HepG2 (cell line): ENCODE measurements at regions of chr4 and their contacts with region 1.

Region 1: DNA sequence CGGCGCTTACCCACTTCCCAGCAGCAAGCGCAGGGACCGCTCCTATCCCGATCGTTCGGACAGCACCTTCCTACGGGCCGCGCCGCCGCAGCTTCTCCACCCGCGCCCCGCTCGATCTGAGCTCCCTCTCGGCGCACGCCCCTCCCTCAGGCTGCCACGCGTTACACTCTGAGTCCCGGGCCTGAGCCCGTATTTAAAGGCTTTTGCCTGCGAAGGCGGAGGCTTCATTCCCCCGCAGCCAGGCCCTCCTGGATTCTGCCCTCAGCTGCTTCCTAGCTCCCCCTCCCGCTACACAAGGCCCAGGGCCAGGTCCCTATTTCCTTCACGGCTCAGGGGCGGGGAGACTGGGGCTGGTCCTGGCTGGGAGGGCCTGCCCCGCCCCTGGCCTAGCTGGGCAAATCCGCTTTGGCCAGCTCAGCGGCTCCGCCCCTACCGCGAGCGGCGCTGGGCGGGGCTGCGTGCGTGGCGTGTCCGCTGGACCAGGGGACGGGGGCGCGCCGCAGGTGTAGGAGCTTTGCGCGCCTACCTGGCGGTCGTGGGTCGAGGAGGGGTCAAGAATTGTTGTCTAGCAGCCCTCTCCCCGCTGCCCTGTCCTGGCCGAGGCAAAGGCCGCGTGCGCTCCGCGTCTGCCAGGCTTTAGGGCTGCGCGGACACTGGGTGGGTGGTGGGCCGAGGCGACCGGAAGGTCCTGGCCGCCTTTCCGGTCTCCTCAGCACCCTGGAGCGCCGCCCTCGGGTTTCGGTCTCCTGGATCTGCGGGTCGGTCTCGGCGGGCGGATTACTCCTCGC is at the start of gene UGDH:
- DNase-seq: peak; percentile 98
- ATAC-seq: peak; percentile 89
- H3K4me3 ChIP-seq: peak within 1 kb of the TSS; percentile 95 to 96 (median 96)
- H3K27ac ChIP-seq: peak within 1 kb of the TSS; percentile 94
- H3K4me1 ChIP-seq: peaks cover 24% of the 10 kb centered on the region
- H3K27me3 ChIP-seq: peaks cover 0 to 4% of the 10 kb centered on the region in 2 experiments; a peak in 1 of 5 replicates
- CTCF ChIP-seq: peak; percentile 49
- EP300 ChIP-seq: peak; percentile 11 to 55; a peak in 2 of 4 replicates
- POLR2A ChIP-seq: peak; percentile 100
- RAD21 ChIP-seq: peak; percentile 76
- total RNA-seq, gene UGDH: 384 and 661 TPM in 2 replicates

Region 2: DNA sequence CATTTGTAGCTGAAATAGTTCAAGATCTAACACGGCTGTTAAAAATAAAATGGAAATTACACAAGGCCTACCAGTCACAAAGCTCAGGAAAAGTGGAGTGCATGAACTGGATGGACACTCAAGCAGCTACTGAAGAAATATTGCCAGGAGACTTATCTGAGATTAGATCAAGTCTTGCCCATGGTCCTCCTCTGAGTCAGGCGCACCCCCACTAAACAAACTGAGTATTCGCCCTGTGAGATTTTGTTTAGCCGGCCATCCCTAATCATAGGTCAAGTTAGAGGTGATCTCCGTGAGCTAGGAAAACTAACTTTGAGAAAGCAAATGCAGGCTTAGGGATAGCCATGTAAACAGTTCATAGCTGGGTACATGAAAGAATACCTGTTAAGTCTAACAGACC is 38.8 kb before region 1 on chr4:
- CTCF ChIA-PET with region 1: no interaction called
- POLR2A ChIA-PET with region 1: interaction called, 11 read pairs
- in situ Hi-C with region 1: no loop called
- intact Hi-C with region 1: no loop called
- DNase-seq: no peak
- ATAC-seq: no peak
- H3K4me3 ChIP-seq: no peak overlapping the region
- H3K27ac ChIP-seq: no peak overlapping the region
- H3K4me1 ChIP-seq: peaks cover 43% of the 10 kb centered on the region
- H3K27me3 ChIP-seq: no peaks in the 10 kb centered on the region
- CTCF ChIP-seq: no peak
- EP300 ChIP-seq: no peak
- POLR2A ChIP-seq: no peak
- RAD21 ChIP-seq: no peak

Region 3: GRCh38 chr4:39559626-39560025 is 32.2 kb after region 1 on chr4:
- CTCF ChIA-PET with region 1: no interaction called
- POLR2A ChIA-PET with region 1: interaction called, 66 read pairs
- in situ Hi-C with region 1: no loop called
- intact Hi-C with region 1: loop called (anchors 1 kb)
- DNase-seq: no peak
- ATAC-seq: no peak
- H3K4me3 ChIP-seq: no peak overlapping the region
- H3K27ac ChIP-seq: no peak overlapping the region
- H3K4me1 ChIP-seq: peaks cover 26% of the 10 kb centered on the region
- H3K27me3 ChIP-seq: no peaks in the 10 kb centered on the region; a peak in 1 of 5 replicates
- CTCF ChIP-seq: no peak
- EP300 ChIP-seq: no peak
- POLR2A ChIP-seq: no peak
- RAD21 ChIP-seq: no peak

Region 4: GRCh38 chr4:39638354-39639240 is 111.1 kb after region 1 on chr4 and contains the start of gene SMIM14:
- CTCF ChIA-PET with region 1: no interaction called
- POLR2A ChIA-PET with region 1: interaction called, 67 read pairs
- in situ Hi-C with region 1: loop called (anchors 5 kb)
- intact Hi-C with region 1: loop called (anchors 2 kb)
- DNase-seq: peak; percentile 96
- ATAC-seq: peak; percentile 92
- H3K4me3 ChIP-seq: peak within 1 kb of the TSS; percentile 83 to 95 (median 87)
- H3K27ac ChIP-seq: peak within 1 kb of the TSS; percentile 92
- H3K4me1 ChIP-seq: peaks cover 54% of the 10 kb centered on the region
- H3K27me3 ChIP-seq: no peaks in the 10 kb centered on the region; a peak in 1 of 5 replicates
- CTCF ChIP-seq: peak; percentile 36
- EP300 ChIP-seq: peak; percentile 31 to 58; a peak in 2 of 4 replicates
- POLR2A ChIP-seq: peak; percentile 87 to 92
- RAD21 ChIP-seq: 0 out of 2 replicates have a peak, but pooled peaks have one; percentile 28
- total RNA-seq, gene SMIM14: 16.3 and 26.2 TPM in 2 replicates

Region 5: GRCh38 chr4:39697740-39698423 is 170.4 kb after region 1 on chr4 and contains the start of gene UBE2K:
- CTCF ChIA-PET with region 1: no interaction called
- POLR2A ChIA-PET with region 1: interaction called, 39 read pairs
- in situ Hi-C with region 1: no loop called
- intact Hi-C with region 1: loop called (anchors 2 kb)
- DNase-seq: peak; percentile 83
- ATAC-seq: peak; percentile 93
- H3K4me3 ChIP-seq: peak within 1 kb of the TSS; percentile 74 to 95 (median 79)
- H3K27ac ChIP-seq: peak within 1 kb of the TSS; percentile 96
- H3K4me1 ChIP-seq: peaks cover 18% of the 10 kb centered on the region
- H3K27me3 ChIP-seq: no peaks in the 10 kb centered on the region; a peak in 1 of 5 replicates
- CTCF ChIP-seq: no peak
- EP300 ChIP-seq: no peak; a peak in 1 of 4 replicates
- POLR2A ChIP-seq: peak; percentile 75 to 94
- RAD21 ChIP-seq: peak; percentile 49
- total RNA-seq, gene UBE2K: 36.2 and 72.9 TPM in 2 replicates